OCI-LY7 (cell line): ENCODE measurements at regions of chr2 and their contacts with region 1.

Region 1: GRCh38 chr2:101831351-101831865 is 133.9 kb downstream of the MAP4K4 start:
- DNase-seq: peak; percentile 77
- H3K4me3 ChIP-seq: no peak overlapping the region
- H3K27ac ChIP-seq: no peak overlapping the region
- H3K4me1 ChIP-seq: peaks cover 21% of the 10 kb centered on the region
- CTCF ChIP-seq: peak; percentile 87

Region 2: GRCh38 chr2:101341901-101342624 is 489.3 kb before region 1 on chr2:
- CTCF ChIA-PET with region 1: no interaction called
- POLR2A ChIA-PET with region 1: no interaction called
- intact Hi-C with region 1: loop called (anchors 10 kb)
- DNase-seq: peak; percentile 57
- H3K4me3 ChIP-seq: no peak overlapping the region
- H3K27ac ChIP-seq: no peak overlapping the region
- H3K4me1 ChIP-seq: no peaks in the 10 kb centered on the region
- CTCF ChIP-seq: peak; percentile 92

Region 3: DNA sequence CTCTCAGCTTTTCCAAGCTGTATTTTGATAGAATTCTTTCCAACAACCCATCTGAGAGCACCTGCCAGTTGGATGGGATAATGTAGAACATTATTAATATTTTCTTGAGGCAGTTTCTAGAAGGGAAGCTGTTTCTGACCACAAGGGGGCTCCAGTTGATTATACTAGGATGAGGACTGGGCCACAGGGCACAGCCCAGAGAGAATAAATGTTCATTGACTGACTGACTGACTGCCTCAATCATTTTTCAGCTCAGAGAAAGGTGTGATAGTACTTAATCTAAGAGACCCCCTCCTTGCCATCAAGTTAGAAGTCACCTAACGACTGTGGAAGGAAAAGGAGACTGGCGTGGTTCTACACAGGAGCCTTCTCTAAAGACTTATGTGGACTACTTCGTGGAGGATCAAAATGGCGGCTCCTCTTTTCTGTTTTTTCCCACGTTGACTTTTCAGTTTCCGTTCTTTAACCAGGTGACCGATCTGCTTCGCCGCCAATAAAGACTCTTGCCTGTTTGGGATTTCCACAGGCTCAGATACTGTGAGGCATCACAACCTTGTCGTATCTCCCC is 412.2 kb before region 1 on chr2:
- CTCF ChIA-PET with region 1: no interaction called
- POLR2A ChIA-PET with region 1: no interaction called
- intact Hi-C with region 1: loop called (anchors 2 kb)
- DNase-seq: peak; percentile 67
- H3K4me3 ChIP-seq: no peak overlapping the region
- H3K27ac ChIP-seq: no peak overlapping the region
- H3K4me1 ChIP-seq: no peaks in the 10 kb centered on the region
- CTCF ChIP-seq: peak; percentile 89

Region 4: GRCh38 chr2:101518578-101519492 is 312.6 kb before region 1 on chr2:
- CTCF ChIA-PET with region 1: no interaction called
- POLR2A ChIA-PET with region 1: no interaction called
- intact Hi-C with region 1: loop called (anchors 5 kb)
- DNase-seq: peak; percentile 23
- H3K4me3 ChIP-seq: no peak overlapping the region
- H3K27ac ChIP-seq: no peak overlapping the region
- H3K4me1 ChIP-seq: no peaks in the 10 kb centered on the region
- CTCF ChIP-seq: peak; percentile 36; the same call in 1 of the 2 replicates

Region 5: DNA sequence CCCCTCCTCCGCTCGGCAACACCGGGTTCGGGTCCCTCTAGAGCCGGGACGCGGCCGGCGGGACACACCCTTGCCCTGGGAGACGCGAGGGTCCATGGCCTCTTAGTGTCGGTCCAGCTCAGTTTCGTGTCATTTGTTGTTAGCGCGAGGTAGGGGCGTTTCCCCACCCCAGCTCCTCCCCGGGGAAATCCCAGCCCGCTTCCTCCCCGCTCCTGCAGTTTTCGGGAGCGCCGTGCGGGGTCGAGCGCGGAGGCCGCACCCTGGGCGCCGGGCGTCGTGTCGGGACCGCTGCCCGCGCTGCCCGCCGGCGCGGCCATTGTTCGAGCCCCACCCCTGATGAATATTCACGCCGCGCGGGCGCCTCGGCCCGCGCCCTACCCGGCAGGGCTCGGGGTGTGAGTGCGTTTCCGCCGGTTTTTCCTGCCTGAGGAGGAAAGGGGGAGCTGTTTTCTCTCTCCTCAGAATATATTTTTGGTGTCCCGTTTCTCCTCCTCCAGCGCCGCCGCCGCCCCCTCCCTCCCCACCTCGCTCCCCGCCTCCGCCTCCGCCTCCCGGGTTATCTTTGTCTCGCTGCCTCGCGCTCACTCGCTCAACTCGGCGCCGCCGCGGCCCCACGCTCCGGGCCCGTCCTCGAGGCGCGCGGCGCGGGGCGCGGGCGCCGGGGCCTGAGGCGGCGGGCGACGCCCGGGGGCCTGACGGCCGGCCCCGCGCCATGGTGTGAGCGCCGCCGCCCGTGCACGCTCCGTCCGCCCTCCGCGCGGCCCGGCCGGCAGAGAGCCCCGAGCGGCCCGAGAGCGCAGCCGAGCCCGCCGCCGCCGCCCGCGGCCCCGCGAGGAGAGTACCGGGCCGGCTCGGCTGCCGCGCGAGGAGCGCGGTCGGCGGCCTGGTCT is 134.0 kb before region 1 on chr2 and contains the start of gene MAP4K4:
- CTCF ChIA-PET with region 1: interaction called, 5 read pairs
- POLR2A ChIA-PET with region 1: interaction called, 4 read pairs
- intact Hi-C with region 1: loop called (anchors 2 kb)
- DNase-seq: peak; percentile 87
- H3K4me3 ChIP-seq: peak within 1 kb of the TSS; percentile 93
- H3K27ac ChIP-seq: peak within 1 kb of the TSS; percentile 78
- H3K4me1 ChIP-seq: peaks cover 26% of the 10 kb centered on the region
- CTCF ChIP-seq: peak; percentile 31; the same call in 1 of the 2 replicates
- total RNA-seq, gene MAP4K4: 67.2 and 74.0 TPM in 2 replicates

Region 6: GRCh38 chr2:101770726-101771125 is 60.7 kb before region 1 on chr2:
- CTCF ChIA-PET with region 1: no interaction called
- POLR2A ChIA-PET with region 1: no interaction called
- intact Hi-C with region 1: loop called (anchors 1 kb)
- DNase-seq: peak; percentile 68
- H3K4me3 ChIP-seq: no peak overlapping the region
- H3K27ac ChIP-seq: no peak overlapping the region
- H3K4me1 ChIP-seq: peaks cover 53% of the 10 kb centered on the region
- CTCF ChIP-seq: peak; percentile 87